Heart right ventricle (tissue), 16 donors: ENCODE measurements at regions of chr2 and their contacts with region 1.

Region 1: GRCh38 chr2:65103013-65103715 is 26.7 kb downstream of the RAB1A start:
- DNase-seq: no peak
- ATAC-seq: peak in 2 of 8 donors; percentile 23 to 27
- H3K4me3 ChIP-seq: no peak overlapping the region
- H3K27ac ChIP-seq: no peak overlapping the region
- H3K4me1 ChIP-seq: peaks cover 8 to 53% (median 29%) of the 10 kb centered on the region in 9 donors
- H3K27me3 ChIP-seq: no peaks in the 10 kb centered on the region
- CTCF ChIP-seq: no peak

Region 2: GRCh38 chr2:65083187-65083586 is 20.0 kb before region 1 on chr2:
- intact Hi-C with region 1: loop called in 1 of 10 experiments (anchors 2 kb)
- DNase-seq: no peak
- ATAC-seq: no peak
- H3K4me3 ChIP-seq: no peak overlapping the region
- H3K27ac ChIP-seq: no peak overlapping the region
- H3K4me1 ChIP-seq: peaks cover 0 to 58% (median 27%) of the 10 kb centered on the region in 9 donors
- H3K27me3 ChIP-seq: no peaks in the 10 kb centered on the region
- CTCF ChIP-seq: no peak

Region 3: GRCh38 chr2:65320042-65320725 is 217.0 kb after region 1 on chr2:
- intact Hi-C with region 1: no loop called
- DNase-seq: peak in 1 of 2 donors; percentile 33
- ATAC-seq: peak in 7 of 8 donors; percentile 29 to 84 (median 58)
- H3K4me3 ChIP-seq: no peak overlapping the region
- H3K27ac ChIP-seq: peak overlapping the region in 2 of 10 donors; percentile 28 to 47
- H3K4me1 ChIP-seq: peaks cover 0 to 18% (median 0%) of the 10 kb centered on the region in 9 donors
- H3K27me3 ChIP-seq: no peaks in the 10 kb centered on the region
- CTCF ChIP-seq: peak in 1 of 9 donors; percentile 30